ENCODE measurements at regions of chr12 and their contacts with region 1.

Region 1: GRCh38 chr12:42299392-42300308 is 26.2 kb downstream of the ZCRB1 start:
- DNase-seq: peak; percentile 89
- H3K4me3 Mint-ChIP-seq: peak overlapping the region; percentile 71
- H3K27ac Mint-ChIP-seq: peak overlapping the region; percentile 88
- H3K4me1 Mint-ChIP-seq: peaks cover 17% of the 10 kb centered on the region
- H3K27me3 Mint-ChIP-seq: no peaks in the 10 kb centered on the region

Region 2: GRCh38 chr12:42097971-42098370 is 201.7 kb before region 1 on chr12:
- CTCF ChIA-PET with region 1: no interaction called
- POLR2A ChIA-PET with region 1: no interaction called
- intact Hi-C with region 1: loop called (anchors 5 kb)
- DNase-seq: no peak
- H3K4me3 Mint-ChIP-seq: peak overlapping the region; percentile 71
- H3K27ac Mint-ChIP-seq: peak overlapping the region; percentile 85
- H3K4me1 Mint-ChIP-seq: peaks cover 29% of the 10 kb centered on the region
- H3K27me3 Mint-ChIP-seq: no peaks in the 10 kb centered on the region

Region 3: DNA sequence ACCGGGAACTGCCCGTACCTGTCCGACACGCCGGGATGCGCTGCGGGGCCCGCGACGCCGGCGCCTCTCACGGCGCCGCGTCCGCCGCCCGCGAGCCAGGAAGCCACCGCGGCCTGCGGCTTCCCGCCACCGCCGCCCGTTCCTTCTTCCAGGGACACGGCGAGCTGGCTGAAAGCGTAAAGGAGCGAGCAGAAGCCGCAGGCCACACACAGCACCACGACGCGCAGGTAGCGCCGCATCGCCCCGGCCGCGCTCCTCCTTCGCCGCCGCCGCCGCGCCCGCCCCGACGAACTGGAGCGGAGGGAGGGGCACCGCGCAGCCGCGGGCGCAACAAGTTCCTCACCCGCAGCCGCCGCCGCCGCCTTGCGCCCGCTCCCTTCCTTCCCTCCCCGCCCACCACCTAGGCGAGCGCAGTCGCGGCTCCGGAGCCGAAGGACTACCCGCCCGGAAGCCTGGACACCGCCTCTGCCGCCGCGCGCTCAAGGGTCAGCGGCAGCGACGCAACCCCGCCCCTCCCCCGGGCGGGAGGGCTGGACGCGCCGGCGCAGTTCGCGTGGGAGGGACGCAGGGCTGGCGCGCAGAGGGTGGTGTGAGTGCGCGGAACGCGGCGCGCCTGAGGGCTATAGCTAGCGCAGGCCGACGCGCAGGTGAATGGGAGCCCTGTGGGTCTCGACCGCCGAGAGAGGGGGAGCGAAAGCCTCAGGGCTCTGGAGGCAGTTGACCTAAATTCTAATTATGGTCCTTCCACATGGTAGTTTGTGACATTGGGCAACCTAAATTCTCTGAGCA is 155.0 kb before region 1 on chr12 and contains the start of gene GXYLT1:
- CTCF ChIA-PET with region 1: no interaction called
- POLR2A ChIA-PET with region 1: no interaction called
- intact Hi-C with region 1: loop called (anchors 1 kb)
- DNase-seq: peak; percentile 88
- H3K4me3 Mint-ChIP-seq: peak within 1 kb of the TSS; percentile 93
- H3K27ac Mint-ChIP-seq: peak within 1 kb of the TSS; percentile 75
- H3K4me1 Mint-ChIP-seq: peaks cover 35% of the 10 kb centered on the region
- H3K27me3 Mint-ChIP-seq: no peaks in the 10 kb centered on the region
- total RNA-seq, gene GXYLT1: 7.0 to 8.3 TPM

Region 4: DNA sequence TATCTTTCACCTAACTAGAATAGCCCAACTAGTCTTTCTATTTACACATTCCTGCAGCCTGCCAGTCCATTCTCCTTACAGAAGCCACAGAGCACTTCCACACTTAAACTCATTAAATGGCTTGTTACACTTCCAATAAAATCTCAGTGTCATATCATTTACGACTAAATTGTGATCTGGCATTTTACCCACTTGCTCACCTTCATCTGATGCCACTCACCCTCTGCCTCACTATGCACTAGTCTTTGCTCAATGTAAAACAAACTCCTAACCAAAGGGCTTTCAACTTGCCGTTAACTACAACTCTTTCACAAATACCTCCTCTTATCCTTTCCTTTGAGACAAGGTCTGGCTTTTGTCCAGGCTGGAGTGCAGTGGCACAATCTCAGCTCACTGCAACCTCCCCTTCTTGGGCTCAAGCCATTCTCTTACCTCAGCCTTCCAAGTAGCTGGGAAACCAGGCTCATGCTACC is 85.7 kb before region 1 on chr12:
- CTCF ChIA-PET with region 1: no interaction called
- POLR2A ChIA-PET with region 1: no interaction called
- intact Hi-C with region 1: no loop called
- DNase-seq: no peak
- H3K4me3 Mint-ChIP-seq: no peak overlapping the region
- H3K27ac Mint-ChIP-seq: no peak overlapping the region
- H3K4me1 Mint-ChIP-seq: peaks cover 15% of the 10 kb centered on the region
- H3K27me3 Mint-ChIP-seq: no peaks in the 10 kb centered on the region

Region 5: GRCh38 chr12:42237052-42237852 is 62.4 kb before region 1 on chr12:
- CTCF ChIA-PET with region 1: no interaction called
- POLR2A ChIA-PET with region 1: no interaction called
- intact Hi-C with region 1: loop called (anchors 1 kb)
- DNase-seq: peak; percentile 84
- H3K4me3 Mint-ChIP-seq: peak overlapping the region; percentile 87
- H3K27ac Mint-ChIP-seq: peak overlapping the region; percentile 56
- H3K4me1 Mint-ChIP-seq: peaks cover 34% of the 10 kb centered on the region
- H3K27me3 Mint-ChIP-seq: no peaks in the 10 kb centered on the region

Region 6: GRCh38 chr12:42261708-42262107 is 37.9 kb before region 1 on chr12:
- CTCF ChIA-PET with region 1: no interaction called
- POLR2A ChIA-PET with region 1: no interaction called
- intact Hi-C with region 1: loop called (anchors 5 kb)
- DNase-seq: peak; percentile 15
- H3K4me3 Mint-ChIP-seq: no peak overlapping the region
- H3K27ac Mint-ChIP-seq: no peak overlapping the region
- H3K4me1 Mint-ChIP-seq: peaks cover 4% of the 10 kb centered on the region
- H3K27me3 Mint-ChIP-seq: no peaks in the 10 kb centered on the region

Region 7: DNA sequence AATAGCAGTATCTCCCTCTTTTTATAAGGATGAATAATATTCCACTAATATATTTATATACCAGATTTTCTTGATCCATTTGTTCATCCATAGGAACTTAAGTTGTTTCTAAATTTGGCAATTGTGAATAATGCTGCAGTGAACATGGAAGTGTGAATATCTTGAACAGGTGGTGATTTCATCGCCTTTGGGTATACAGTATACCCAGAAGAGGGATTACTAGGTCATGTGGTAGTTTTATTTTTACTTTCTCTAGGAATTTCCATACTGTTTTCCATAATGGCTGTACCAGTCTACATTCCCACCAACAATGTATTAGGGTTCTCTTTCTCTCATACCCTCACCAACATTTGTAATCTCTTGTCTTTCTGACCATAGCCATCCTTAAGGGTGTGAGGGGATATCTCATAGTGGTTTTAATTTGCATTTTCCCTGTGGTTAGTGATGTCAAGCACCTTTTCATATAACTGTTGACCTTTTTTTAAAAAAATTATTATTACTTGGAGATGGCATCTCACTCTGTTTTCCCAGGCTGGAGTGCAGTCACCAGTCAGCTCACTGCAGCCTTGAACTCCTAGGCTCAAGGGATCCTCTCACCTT is 46.9 kb after region 1 on chr12:
- CTCF ChIA-PET with region 1: no interaction called
- POLR2A ChIA-PET with region 1: no interaction called
- intact Hi-C with region 1: loop called (anchors 1 kb)
- DNase-seq: no peak
- H3K4me3 Mint-ChIP-seq: no peak overlapping the region
- H3K27ac Mint-ChIP-seq: no peak overlapping the region
- H3K4me1 Mint-ChIP-seq: peaks cover 28% of the 10 kb centered on the region
- H3K27me3 Mint-ChIP-seq: no peaks in the 10 kb centered on the region

Region 8: DNA sequence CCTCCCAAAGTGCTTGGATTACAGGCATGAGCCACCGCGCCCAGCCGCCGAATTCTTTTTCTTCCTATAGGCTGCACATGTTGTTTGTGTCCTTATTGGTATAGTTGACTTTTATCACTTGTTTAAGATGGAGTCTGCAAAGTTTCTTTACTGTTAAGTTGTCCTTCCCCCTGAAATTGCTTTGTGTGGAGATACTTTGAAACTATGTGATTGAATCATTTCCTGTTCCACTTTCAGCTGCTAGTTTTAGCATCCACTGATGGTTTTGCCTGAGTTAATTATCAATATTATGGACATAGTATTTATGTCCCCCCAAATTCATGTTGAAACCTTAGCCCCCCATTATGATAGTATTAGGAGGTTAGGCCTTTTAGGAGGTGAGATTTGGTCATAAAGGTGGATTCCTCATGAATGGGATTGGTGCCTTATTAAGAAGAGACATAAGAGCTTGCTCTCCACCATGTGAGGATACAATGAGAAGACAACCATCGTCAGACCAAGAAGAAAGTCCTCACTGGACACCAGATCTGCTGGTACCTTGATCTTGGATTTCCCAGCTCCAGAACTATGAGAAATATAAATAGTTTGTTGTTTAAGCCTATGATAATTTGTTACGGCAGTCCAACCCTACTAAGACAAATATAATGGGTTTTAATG is 61.2 kb after region 1 on chr12:
- CTCF ChIA-PET with region 1: no interaction called
- POLR2A ChIA-PET with region 1: no interaction called
- intact Hi-C with region 1: loop called (anchors 2 kb)
- DNase-seq: no peak
- H3K4me3 Mint-ChIP-seq: no peak overlapping the region
- H3K27ac Mint-ChIP-seq: peak overlapping the region; percentile 50
- H3K4me1 Mint-ChIP-seq: peaks cover 38% of the 10 kb centered on the region
- H3K27me3 Mint-ChIP-seq: no peaks in the 10 kb centered on the region